Heart right ventricle (tissue), 16 donors: ENCODE measurements at regions of chr15 and their contacts with region 1.

Region 1: GRCh38 chr15:26421065-26421464 is 351.8 kb downstream of the GABRB3 start:
- DNase-seq: no peak
- ATAC-seq: peak in 2 of 8 donors; percentile 33 to 69
- H3K4me3 ChIP-seq: no peak overlapping the region
- H3K27ac ChIP-seq: no peak overlapping the region
- H3K4me1 ChIP-seq: no peaks in the 10 kb centered on the region
- H3K27me3 ChIP-seq: no peaks in the 10 kb centered on the region
- CTCF ChIP-seq: no peak

Region 2: DNA sequence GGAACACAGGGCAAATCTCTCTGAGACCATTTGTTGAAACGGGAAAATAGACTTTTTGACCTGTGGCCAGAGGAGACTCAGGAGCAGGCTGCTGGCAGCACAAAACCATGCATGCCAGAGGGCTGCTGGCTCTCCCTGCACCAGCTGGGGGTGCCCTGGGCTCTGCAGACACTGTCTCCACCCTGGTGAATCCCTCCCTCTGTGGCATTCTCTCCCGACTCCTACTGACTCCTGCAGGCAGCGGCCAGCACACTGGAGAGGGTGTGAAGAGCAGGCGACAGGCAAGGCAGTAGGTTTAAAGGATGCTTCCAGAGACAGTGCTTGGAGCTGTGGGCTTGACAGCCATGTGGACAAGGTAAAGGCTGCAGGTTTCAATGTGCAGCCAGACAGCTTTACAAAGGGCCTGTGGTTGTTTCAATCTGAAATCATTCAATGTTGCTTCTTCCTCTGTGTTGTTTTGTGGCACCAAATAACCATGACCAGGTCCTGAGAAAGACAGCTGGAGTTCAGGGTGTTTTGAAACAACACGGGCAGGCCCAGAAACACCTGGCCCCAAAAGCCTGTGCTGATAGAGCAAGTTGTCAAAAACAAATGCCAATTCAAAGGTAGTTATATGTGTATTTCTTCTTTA is 126.9 kb before region 1 on chr15:
- intact Hi-C with region 1: no loop called
- DNase-seq: peak; percentile 19 to 37
- ATAC-seq: peak; percentile 70 to 97 (median 90)
- H3K4me3 ChIP-seq: no peak overlapping the region
- H3K27ac ChIP-seq: no peak overlapping the region
- H3K4me1 ChIP-seq: peaks cover 0 to 4% (median 0%) of the 10 kb centered on the region in 9 donors
- H3K27me3 ChIP-seq: no peaks in the 10 kb centered on the region
- CTCF ChIP-seq: peak in 8 of 9 donors; percentile 16 to 59 (median 22)

Region 3: DNA sequence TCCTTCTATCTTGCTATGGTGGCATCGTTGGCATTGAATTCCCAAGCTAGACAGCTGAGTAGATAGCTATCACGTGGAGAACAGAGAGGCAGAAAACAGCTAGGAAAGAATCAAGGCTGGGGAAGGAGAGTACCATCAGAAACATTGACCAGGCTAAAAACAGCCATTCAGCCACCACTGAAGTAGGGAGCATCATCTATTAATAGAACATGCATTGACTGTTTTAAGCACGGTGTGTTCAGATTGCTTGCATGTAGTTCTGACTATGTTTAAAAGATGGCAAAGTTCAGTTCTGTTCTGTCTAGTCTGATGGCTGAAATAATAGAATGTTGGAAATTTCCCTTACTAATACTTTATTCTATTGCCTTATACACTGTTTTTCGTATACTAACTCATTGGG is 61.2 kb before region 1 on chr15:
- intact Hi-C with region 1: loop called in 1 of 10 experiments (anchors 10 kb)
- DNase-seq: no peak
- ATAC-seq: peak in 6 of 8 donors; percentile 64 to 93 (median 73)
- H3K4me3 ChIP-seq: no peak overlapping the region
- H3K27ac ChIP-seq: peak overlapping the region in 3 of 10 donors; percentile 20 to 39 (median 34)
- H3K4me1 ChIP-seq: peaks cover 0 to 8% (median 0%) of the 10 kb centered on the region in 9 donors
- H3K27me3 ChIP-seq: peaks cover 0 to 4% (median 0%) of the 10 kb centered on the region in 7 donors
- CTCF ChIP-seq: no peak